ENCODE measurements at regions of chr11 and their contacts with region 1.

Region 1: GRCh38 chr11:120710354-120711131 is 199.0 kb downstream of the GRIK4 start:
- DNase-seq: peak; percentile 55 to 56
- H3K4me3 ChIP-seq: no peak overlapping the region; a peak in 1 of 8 replicates
- H3K27ac ChIP-seq: no peak overlapping the region
- H3K4me1 ChIP-seq: peaks cover 0 to 8% (median 4%) of the 10 kb centered on the region in 4 experiments; a peak in 3 of 7 replicates
- H3K27me3 ChIP-seq: no peaks in the 10 kb centered on the region; a peak in 2 of 7 replicates
- CTCF ChIP-seq: no peak
- EP300 ChIP-seq: no peak
- POLR2A ChIP-seq: no peak
- RAD21 ChIP-seq: no peak

Region 2: GRCh38 chr11:120682866-120683265 is 27.7 kb before region 1 on chr11:
- CTCF ChIA-PET with region 1: interaction called, 21 read pairs
- POLR2A ChIA-PET with region 1: interaction called, 3 read pairs
- DNase-seq: no peak
- H3K4me3 ChIP-seq: no peak overlapping the region
- H3K27ac ChIP-seq: no peak overlapping the region
- H3K4me1 ChIP-seq: peaks cover 0 to 10% (median 5%) of the 10 kb centered on the region in 4 experiments; a peak in 5 of 7 replicates
- H3K27me3 ChIP-seq: no peaks in the 10 kb centered on the region
- CTCF ChIP-seq: no peak
- EP300 ChIP-seq: no peak
- POLR2A ChIP-seq: no peak
- RAD21 ChIP-seq: no peak

Region 3: GRCh38 chr11:120688163-120688562 is 22.4 kb before region 1 on chr11:
- CTCF ChIA-PET with region 1: interaction called, 300 read pairs
- POLR2A ChIA-PET with region 1: no interaction called
- DNase-seq: no peak
- H3K4me3 ChIP-seq: no peak overlapping the region
- H3K27ac ChIP-seq: no peak overlapping the region
- H3K4me1 ChIP-seq: no peaks in the 10 kb centered on the region
- H3K27me3 ChIP-seq: no peaks in the 10 kb centered on the region
- CTCF ChIP-seq: no peak
- EP300 ChIP-seq: no peak
- POLR2A ChIP-seq: no peak
- RAD21 ChIP-seq: no peak

Region 4: GRCh38 chr11:120746836-120747609 is 36.5 kb after region 1 on chr11:
- CTCF ChIA-PET with region 1: interaction called, 19 read pairs
- POLR2A ChIA-PET with region 1: no interaction called
- DNase-seq: no peak
- H3K4me3 ChIP-seq: no peak overlapping the region
- H3K27ac ChIP-seq: no peak overlapping the region
- H3K4me1 ChIP-seq: peaks cover 2 to 8% (median 4%) of the 10 kb centered on the region in 4 experiments; a peak in 5 of 7 replicates
- H3K27me3 ChIP-seq: peaks cover 0 to 2% (median 0%) of the 10 kb centered on the region in 4 experiments; a peak in 1 of 7 replicates
- CTCF ChIP-seq: no peak
- EP300 ChIP-seq: no peak
- POLR2A ChIP-seq: no peak
- RAD21 ChIP-seq: no peak

Region 5: GRCh38 chr11:120773501-120774031 is 63.0 kb after region 1 on chr11:
- CTCF ChIA-PET with region 1: interaction called, 11 read pairs
- POLR2A ChIA-PET with region 1: interaction called, 3 read pairs
- DNase-seq: no peak
- H3K4me3 ChIP-seq: no peak overlapping the region
- H3K27ac ChIP-seq: no peak overlapping the region
- H3K4me1 ChIP-seq: peaks cover 5 to 21% (median 12%) of the 10 kb centered on the region in 4 experiments
- H3K27me3 ChIP-seq: no peaks in the 10 kb centered on the region
- CTCF ChIP-seq: no peak
- EP300 ChIP-seq: no peak
- POLR2A ChIP-seq: no peak
- RAD21 ChIP-seq: no peak

Measured in H1 (cell line).